Panc1 (cell line): ENCODE measurements at regions of chr10 and their contacts with region 1.

Region 1: GRCh38 chr10:101123085-101123814 is 7.8 kb upstream of the TLX1 start:
- DNase-seq: no peak
- ATAC-seq: no peak
- H3K4me3 ChIP-seq: peak overlapping the region; percentile 5 to 14; a peak in 2 of 4 replicates
- H3K27ac ChIP-seq: no peak overlapping the region
- H3K4me1 ChIP-seq: no peaks in the 10 kb centered on the region; the same call in 1 of the 2 replicates
- H3K27me3 ChIP-seq: peaks cover 12% of the 10 kb centered on the region
- CTCF ChIP-seq: no peak

Region 2: GRCh38 chr10:101346177-101346576 is 222.9 kb after region 1 on chr10:
- CTCF ChIA-PET with region 1: no interaction called
- POLR2A ChIA-PET with region 1: no interaction called
- in situ Hi-C with region 1: no loop called
- intact Hi-C with region 1: no loop called
- DNase-seq: no peak
- ATAC-seq: no peak
- H3K4me3 ChIP-seq: no peak overlapping the region
- H3K27ac ChIP-seq: no peak overlapping the region
- H3K4me1 ChIP-seq: no peaks in the 10 kb centered on the region
- H3K27me3 ChIP-seq: no peaks in the 10 kb centered on the region; the same call in 1 of the 2 replicates
- CTCF ChIP-seq: no peak

Region 3: GRCh38 chr10:101693978-101694673 is 570.9 kb after region 1 on chr10:
- CTCF ChIA-PET with region 1: no interaction called
- POLR2A ChIA-PET with region 1: interaction called, 18 read pairs
- in situ Hi-C with region 1: no loop called
- intact Hi-C with region 1: no loop called
- DNase-seq: no peak
- ATAC-seq: peak; percentile 92
- H3K4me3 ChIP-seq: peak overlapping the region; percentile 72 to 76
- H3K27ac ChIP-seq: peak overlapping the region; percentile 80
- H3K4me1 ChIP-seq: peaks cover 28% of the 10 kb centered on the region; the same call in 1 of the 2 replicates
- H3K27me3 ChIP-seq: no peaks in the 10 kb centered on the region
- CTCF ChIP-seq: no peak

Region 4: DNA sequence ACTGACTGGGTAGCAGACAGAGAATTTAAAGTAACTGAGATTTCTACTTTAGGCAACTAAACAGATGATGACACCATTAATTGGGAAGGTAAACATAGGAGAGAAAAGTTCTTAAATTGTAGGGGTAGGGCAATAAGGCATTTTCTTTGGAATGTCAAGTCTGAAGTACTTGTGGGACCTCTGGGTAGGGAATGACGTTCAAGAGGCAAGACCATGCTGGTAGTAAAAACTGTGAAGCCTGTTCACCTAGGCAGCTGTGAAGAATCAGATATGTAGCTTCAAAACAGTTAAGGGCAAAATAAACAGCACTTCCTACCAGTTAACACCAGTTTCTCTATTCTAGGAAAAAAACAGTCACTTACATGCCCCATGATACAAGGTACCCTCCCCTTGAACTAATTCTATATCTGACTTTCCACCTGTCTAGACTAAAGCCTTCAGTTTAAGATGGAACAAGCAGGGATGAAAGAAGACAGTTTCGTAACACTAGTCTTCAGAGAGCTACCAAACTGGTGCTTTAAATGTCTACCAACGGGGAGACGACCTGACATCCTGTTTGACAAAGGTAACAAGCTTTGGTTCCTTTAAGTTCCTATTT is 783.4 kb after region 1 on chr10:
- CTCF ChIA-PET with region 1: no interaction called
- POLR2A ChIA-PET with region 1: no interaction called
- in situ Hi-C with region 1: no loop called
- intact Hi-C with region 1: no loop called
- DNase-seq: no peak
- ATAC-seq: no peak
- H3K4me3 ChIP-seq: no peak overlapping the region
- H3K27ac ChIP-seq: no peak overlapping the region
- H3K4me1 ChIP-seq: no peaks in the 10 kb centered on the region
- H3K27me3 ChIP-seq: no peaks in the 10 kb centered on the region
- CTCF ChIP-seq: no peak